Caco-2 (cell line): ENCODE measurements at regions of chr3 and their contacts with region 1.

Region 1: DNA sequence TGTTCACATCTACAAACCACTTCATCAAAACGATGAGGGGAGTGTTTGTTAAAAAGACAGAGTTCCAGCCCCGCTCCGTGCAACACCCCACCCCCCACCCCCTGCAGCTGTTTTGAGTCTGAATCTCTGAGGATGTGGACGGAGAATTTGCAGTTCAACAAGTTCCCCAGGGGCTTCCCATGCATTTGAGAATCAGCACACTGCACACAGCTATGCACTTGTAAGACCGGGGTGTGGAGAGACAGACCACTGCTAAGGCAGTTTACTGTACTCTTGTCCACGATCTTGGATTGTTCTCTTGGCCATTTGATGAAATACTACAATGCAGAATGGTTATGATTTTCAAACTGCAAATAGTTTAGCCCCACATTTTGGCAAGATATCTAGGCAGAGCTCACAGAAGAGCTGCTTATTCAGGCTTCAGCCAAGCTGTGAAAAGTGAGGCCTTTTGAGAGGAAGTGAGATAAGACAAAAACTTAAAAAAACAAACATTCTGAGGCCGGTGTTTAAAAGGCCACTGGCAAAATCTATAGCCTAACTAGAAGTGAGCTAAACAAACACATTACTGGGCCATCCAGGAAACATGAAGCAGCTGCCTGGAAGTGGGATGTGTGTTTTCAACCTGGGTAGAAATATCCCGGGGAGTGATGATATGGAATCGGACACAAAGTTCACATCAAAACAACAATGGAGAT is 308.2 kb upstream of the ADAMTS9 start:
- DNase-seq: no peak
- H3K4me3 ChIP-seq: no peak overlapping the region
- H3K4me3 Mint-ChIP-seq: no peak overlapping the region
- H3K27ac Mint-ChIP-seq: no peak overlapping the region
- H3K4me1 ChIP-seq: 0 out of 2 replicates have a peak, but pooled peaks cover 5% of the 10 kb centered on the region
- H3K4me1 Mint-ChIP-seq: no peaks in the 10 kb centered on the region
- H3K27me3 ChIP-seq: no peaks in the 10 kb centered on the region
- H3K27me3 Mint-ChIP-seq: no peaks in the 10 kb centered on the region
- CTCF ChIP-seq: no peak

Region 2: GRCh38 chr3:64815195-64815631 is 180.8 kb before region 1 on chr3:
- CTCF ChIA-PET with region 1: no interaction called
- POLR2A ChIA-PET with region 1: no interaction called
- intact Hi-C with region 1: no loop called
- DNase-seq: no peak
- H3K4me3 ChIP-seq: no peak overlapping the region
- H3K4me3 Mint-ChIP-seq: no peak overlapping the region
- H3K27ac Mint-ChIP-seq: no peak overlapping the region
- H3K4me1 ChIP-seq: no peaks in the 10 kb centered on the region
- H3K4me1 Mint-ChIP-seq: no peaks in the 10 kb centered on the region
- H3K27me3 ChIP-seq: no peaks in the 10 kb centered on the region
- H3K27me3 Mint-ChIP-seq: no peaks in the 10 kb centered on the region
- CTCF ChIP-seq: no peak

Region 3: GRCh38 chr3:65039754-65040210 is 43.8 kb after region 1 on chr3:
- CTCF ChIA-PET with region 1: no interaction called
- POLR2A ChIA-PET with region 1: no interaction called
- intact Hi-C with region 1: loop called (anchors 2 kb)
- DNase-seq: peak; percentile 86 to 95
- H3K4me3 ChIP-seq: no peak overlapping the region
- H3K4me3 Mint-ChIP-seq: peak overlapping the region; percentile 30
- H3K27ac Mint-ChIP-seq: peak overlapping the region; percentile 92
- H3K4me1 ChIP-seq: peaks cover 20% of the 10 kb centered on the region
- H3K4me1 Mint-ChIP-seq: peaks cover 18% of the 10 kb centered on the region
- H3K27me3 ChIP-seq: no peaks in the 10 kb centered on the region
- H3K27me3 Mint-ChIP-seq: no peaks in the 10 kb centered on the region
- CTCF ChIP-seq: no peak